Activated CD4-positive, alpha-beta memory T cell treated with anti-CD3 and anti-CD28 coated beads, Interleukin-2, amount 10 ng/mL, durations not matched to agents 7 days and 5 days (primary cell): ENCODE measurements at regions of chr13 and their contacts with region 1.

Region 1: GRCh38 chr13:98542568-98543377 is 34.1 kb downstream of the STK24 start:
- DNase-seq: no peak
- H3K4me3 Mint-ChIP-seq: peak overlapping the region; percentile 40
- H3K27ac Mint-ChIP-seq: peak overlapping the region; percentile 66
- H3K4me1 Mint-ChIP-seq: peaks cover 89% of the 10 kb centered on the region
- H3K27me3 Mint-ChIP-seq: no peaks in the 10 kb centered on the region

Region 2: DNA sequence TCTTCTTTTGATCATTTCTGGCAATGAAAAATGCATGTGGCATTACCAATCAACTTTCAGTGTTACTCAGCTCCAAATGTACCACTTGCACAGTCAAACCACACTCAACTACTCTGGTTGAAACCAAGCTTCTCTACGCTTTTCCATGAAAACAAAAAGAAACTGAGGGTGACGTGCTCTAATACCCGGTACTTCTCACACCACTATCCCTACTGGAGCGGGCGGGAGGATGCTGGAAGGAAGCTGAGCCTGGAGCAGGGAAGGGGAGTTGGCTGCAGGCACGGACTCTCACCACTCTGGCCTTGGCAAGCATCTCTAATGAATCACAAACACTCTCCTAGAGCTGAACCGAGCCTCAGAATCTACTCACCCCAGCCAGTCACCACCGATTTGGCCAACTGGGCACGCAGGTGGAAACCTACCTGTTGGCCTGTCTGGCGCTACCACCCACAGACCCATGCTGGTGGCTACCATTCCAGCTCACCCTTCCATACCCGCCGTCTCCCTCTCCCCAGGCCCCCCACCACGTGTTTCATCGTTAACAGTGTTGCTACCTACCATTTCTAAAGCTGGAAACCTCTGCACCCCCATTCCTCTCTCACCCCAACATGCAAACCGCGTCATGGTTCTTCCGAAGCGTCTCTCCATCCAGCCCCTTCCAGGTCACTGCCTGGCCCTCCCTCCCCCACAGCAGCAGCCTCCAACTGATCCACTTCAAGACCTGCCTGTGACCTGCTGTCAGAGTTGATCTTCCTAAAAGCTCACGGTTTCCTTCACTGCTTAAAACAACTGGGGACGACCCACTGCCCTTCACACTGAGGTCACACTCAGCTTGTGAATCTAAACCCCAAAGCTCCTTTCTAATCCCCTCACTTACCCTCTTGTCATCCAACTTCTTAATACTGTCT is 13.9 kb before region 1 on chr13:
- CTCF ChIA-PET with region 1: interaction called, 4 read pairs
- POLR2A ChIA-PET with region 1: interaction called, 11 read pairs
- DNase-seq: peak; percentile 25
- H3K4me3 Mint-ChIP-seq: peak overlapping the region; percentile 49
- H3K27ac Mint-ChIP-seq: peak overlapping the region; percentile 73
- H3K4me1 Mint-ChIP-seq: peaks cover 90% of the 10 kb centered on the region
- H3K27me3 Mint-ChIP-seq: no peaks in the 10 kb centered on the region

Region 3: DNA sequence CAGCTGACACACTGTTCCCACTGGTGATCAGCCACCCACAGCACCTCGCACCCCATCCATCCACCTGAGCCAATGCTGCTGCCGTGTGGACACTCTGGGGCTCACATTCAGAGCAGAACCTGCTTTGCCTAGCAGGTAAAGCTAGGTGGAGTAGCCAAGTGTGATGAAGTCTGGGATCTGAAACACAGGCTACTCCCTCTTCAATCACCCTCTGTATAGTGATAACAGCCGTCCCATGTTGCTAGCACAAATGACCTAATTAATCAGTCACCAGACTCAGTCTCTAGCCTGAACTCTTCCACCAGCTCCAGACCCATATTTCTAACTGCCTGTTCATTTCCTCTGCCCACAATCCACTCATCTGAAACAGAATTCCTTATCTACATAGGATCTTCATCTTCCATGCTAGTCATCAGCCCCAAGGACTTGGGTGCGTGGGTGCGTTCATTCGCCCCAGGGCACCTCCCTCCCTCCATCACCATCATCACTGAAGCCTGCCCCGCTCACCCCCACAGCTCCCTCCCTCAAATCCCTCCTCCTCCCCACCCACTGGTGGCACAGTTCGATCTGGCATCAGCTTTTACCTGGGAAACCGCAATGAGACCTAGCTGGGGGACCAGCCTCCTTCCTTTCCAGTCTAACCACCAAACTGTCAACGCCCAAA is 14.3 kb after region 1 on chr13:
- CTCF ChIA-PET with region 1: interaction called, 11 read pairs
- POLR2A ChIA-PET with region 1: interaction called, 4 read pairs
- DNase-seq: no peak
- H3K4me3 Mint-ChIP-seq: peak overlapping the region; percentile 4
- H3K27ac Mint-ChIP-seq: peak overlapping the region; percentile 68
- H3K4me1 Mint-ChIP-seq: peaks cover 76% of the 10 kb centered on the region
- H3K27me3 Mint-ChIP-seq: no peaks in the 10 kb centered on the region

Region 4: DNA sequence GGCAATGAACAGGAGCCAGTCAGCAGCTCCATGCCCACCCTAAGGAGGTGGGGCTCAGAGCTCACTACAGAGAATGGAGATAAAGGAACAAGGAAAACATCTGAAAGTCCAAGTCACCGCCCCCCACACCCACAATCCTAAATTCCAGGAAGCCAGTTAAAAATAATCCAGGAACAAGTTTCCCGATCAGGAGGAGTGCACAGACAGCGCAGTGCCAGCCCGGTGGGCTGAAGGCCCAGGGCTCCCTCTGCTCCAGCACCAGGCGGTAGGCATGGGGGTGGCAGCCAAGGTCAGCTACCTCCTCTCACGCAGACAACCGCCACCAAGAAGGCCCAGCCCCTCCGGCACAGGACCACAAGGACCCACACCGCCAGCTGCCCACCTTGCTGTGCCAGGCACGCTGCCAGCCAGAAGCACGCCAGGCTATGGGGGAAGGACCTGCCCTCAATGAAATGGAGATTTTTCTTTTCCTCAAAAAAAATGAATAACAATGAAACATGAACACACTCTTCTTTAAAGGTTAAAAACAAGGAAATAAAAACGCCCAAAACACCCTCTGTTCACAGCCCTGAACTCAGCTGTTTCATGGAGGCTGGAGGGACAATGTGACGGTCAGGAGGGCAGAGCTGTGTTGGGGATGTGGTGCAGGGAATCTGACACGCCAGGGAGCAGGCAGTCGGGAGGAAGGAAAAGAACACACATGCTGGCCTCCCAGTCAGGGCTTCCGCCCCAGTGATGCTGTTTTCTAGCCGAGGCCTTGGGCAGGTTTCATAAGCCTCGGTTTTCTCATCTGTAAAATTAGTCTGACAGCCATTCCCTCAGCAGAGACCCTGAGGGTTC is 23.2 kb after region 1 on chr13:
- CTCF ChIA-PET with region 1: no interaction called
- POLR2A ChIA-PET with region 1: interaction called, 14 read pairs
- DNase-seq: no peak
- H3K4me3 Mint-ChIP-seq: peak overlapping the region; percentile 18
- H3K27ac Mint-ChIP-seq: peak overlapping the region; percentile 80
- H3K4me1 Mint-ChIP-seq: peaks cover 92% of the 10 kb centered on the region
- H3K27me3 Mint-ChIP-seq: no peaks in the 10 kb centered on the region